ENCODE measurements at regions of chr1 and their contacts with region 1.

Region 1: GRCh38 chr1:229452956-229453801 is 19.3 kb upstream of the ACTA1 start:
- DNase-seq: no peak
- ATAC-seq: no peak
- H3K4me3 ChIP-seq: no peak overlapping the region
- H3K27ac ChIP-seq: no peak overlapping the region
- H3K4me1 ChIP-seq: peaks cover 0 to 7% (median 0%) of the 10 kb centered on the region in 9 donors
- H3K27me3 ChIP-seq: no peaks in the 10 kb centered on the region
- CTCF ChIP-seq: peak in 7 of 9 donors; percentile 21 to 55 (median 40)

Region 2: GRCh38 chr1:229370601-229371021 is 82.6 kb before region 1 on chr1:
- intact Hi-C with region 1: loop called in 1 of 10 experiments (anchors 5 kb)
- DNase-seq: peak; percentile 63 to 78
- ATAC-seq: peak; percentile 90 to 99 (median 96)
- H3K4me3 ChIP-seq: no peak overlapping the region
- H3K27ac ChIP-seq: peak overlapping the region in 6 of 10 donors; percentile 13 to 69 (median 58)
- H3K4me1 ChIP-seq: peaks cover 0 to 8% (median 0%) of the 10 kb centered on the region in 9 donors
- H3K27me3 ChIP-seq: peaks cover 0 to 13% (median 0%) of the 10 kb centered on the region in 7 donors
- CTCF ChIP-seq: peak in 6 of 9 donors; percentile 15 to 49 (median 40)

Measured in heart right ventricle (tissue), 16 donors.